ENCODE measurements at regions of chr16 and their contacts with region 1.

Region 1: DNA sequence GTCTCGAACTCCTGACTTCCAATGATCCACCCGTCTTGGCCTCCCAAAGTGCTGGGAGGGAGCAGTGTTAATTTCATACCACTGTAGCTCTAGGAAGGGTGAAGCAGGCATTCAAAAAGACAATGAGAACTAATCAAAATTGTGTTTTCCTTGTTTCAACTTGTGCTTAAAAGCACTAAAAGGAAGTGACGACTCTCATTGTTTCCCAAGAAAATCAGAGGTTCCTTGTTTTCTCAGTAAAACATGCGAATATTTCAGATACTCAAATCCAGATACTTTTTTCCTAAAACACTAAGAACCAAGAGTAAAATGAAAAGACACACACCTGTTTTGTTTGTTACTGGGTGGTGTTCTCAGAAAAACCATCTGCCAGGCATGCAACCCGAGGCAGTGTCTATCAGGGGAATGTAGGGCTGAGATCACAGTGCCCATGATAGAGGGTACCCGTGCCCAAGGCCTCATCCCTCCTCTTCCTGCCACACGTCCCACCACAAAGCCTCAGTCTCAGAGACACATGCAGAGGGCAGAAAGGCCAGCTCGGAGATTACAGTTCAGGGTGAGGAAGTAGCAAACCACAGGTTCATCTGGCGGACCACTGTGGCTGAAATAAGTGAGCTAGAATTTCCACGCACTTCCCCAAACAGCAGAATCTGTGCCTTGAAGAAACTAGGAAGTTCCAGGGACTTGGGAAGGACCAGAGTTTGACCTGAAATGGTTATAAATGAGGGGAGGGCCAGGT is 33.7 kb downstream of the GINS3 start:
- DNase-seq: peak; percentile 84
- H3K4me3 ChIP-seq: peak overlapping the region; percentile 42
- H3K27ac ChIP-seq: peak overlapping the region; percentile 87
- H3K4me1 ChIP-seq: peaks cover 82% of the 10 kb centered on the region
- CTCF ChIP-seq: no peak

Region 2: DNA sequence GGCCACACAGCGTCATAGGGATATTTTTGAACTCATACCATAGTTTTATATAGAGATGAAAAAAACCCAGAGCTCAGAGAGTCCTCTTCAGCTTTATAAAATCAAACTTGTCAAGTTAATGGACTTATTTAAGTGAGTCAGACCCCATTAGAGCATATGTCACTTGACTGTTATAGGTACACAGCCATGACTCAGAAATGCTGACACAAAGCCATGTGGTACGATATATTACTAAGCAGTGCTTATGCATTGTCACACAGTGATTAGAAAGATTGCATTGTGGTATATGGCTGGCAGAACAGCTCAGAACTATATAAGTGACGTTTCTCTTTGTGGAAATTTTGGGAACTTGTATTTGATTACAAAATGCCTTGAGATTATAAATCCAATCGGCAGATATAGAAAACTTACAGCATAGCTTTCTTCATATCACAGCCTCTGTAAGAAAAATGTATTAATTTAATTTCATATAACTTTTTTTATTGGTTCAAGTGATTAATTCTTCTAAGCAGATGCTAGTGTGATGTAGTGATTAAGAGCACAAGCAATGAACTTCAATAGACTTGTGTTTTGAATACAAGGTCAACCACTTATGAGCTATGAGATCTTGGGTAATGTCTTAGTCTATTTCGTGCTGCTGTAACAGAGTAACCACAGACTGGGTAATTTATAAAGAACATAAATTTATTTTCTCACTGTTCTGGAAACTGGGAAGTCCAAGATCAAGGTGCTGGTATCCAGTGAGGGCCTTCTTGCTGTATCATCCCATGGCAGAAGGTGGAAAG is 59.5 kb before region 1 on chr16:
- CTCF ChIA-PET with region 1: no interaction called
- POLR2A ChIA-PET with region 1: no interaction called
- intact Hi-C with region 1: no loop called
- DNase-seq: no peak
- H3K4me3 ChIP-seq: no peak overlapping the region
- H3K27ac ChIP-seq: no peak overlapping the region
- H3K4me1 ChIP-seq: no peaks in the 10 kb centered on the region
- CTCF ChIP-seq: no peak

Region 3: GRCh38 chr16:58471321-58471975 is 45.5 kb after region 1 on chr16:
- CTCF ChIA-PET with region 1: no interaction called
- POLR2A ChIA-PET with region 1: interaction called, 10 read pairs
- intact Hi-C with region 1: no loop called
- DNase-seq: peak; percentile 42
- H3K4me3 ChIP-seq: no peak overlapping the region
- H3K27ac ChIP-seq: no peak overlapping the region
- H3K4me1 ChIP-seq: peaks cover 39% of the 10 kb centered on the region
- CTCF ChIP-seq: no peak